ENCODE measurements at regions of chr15 and their contacts with region 1.

Region 1: DNA sequence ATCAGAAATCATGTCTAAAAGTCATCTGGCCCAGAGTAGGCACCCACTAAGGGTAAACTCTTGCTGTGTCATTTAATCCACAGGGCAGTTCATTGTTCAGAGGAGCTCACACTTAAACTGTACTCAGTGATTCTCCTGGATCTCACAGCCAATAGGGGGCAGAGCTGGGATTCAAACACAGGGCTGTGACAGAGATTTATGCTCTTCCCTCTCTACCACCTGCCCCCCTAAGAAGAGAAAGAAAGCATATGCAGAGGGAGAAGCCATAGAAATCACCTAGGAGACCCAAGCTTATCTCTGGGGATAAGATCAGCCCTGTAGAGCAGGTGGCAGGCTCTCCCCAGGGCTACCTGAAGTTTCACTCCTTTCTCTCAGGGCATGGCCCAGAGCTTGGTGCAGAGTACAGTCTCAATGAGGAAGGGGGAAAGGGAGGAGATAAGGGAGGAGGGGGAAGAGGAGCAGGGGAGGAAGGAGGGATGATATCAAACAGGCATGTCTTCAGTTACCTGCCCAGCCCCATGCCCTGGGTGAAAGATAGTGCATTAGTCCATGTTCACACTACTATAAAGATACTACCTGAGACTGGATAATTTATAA is 51.8 kb upstream of the ADPGK start:
- DNase-seq: peak in 1 of 2 experiments; percentile 24

Region 2: DNA sequence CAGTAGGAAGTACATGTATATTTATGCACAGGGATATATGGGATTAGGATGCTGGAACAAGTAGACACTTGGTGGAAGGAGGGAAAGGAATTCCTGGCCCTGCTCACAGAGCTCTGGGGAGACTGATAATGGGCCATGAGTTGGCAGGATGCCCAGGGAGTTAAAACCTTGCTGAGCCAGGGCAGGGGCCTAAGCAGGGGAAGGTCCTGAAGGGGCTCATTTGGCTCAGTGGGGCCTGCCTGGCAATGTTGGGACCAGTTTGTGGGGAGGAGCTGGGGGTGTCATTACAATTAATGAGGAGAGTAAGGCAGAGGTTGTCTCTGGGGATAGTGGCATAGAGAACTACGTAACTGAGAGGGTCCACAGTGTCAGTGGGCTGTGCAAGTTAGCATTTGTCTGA is 72.3 kb after region 1 on chr15:
- in situ Hi-C with region 1: loop called (anchors 5 kb)
- DNase-seq: no peak